Heart left ventricle (tissue), 16 donors: ENCODE measurements at regions of chr3 and their contacts with region 1.

Region 1: DNA sequence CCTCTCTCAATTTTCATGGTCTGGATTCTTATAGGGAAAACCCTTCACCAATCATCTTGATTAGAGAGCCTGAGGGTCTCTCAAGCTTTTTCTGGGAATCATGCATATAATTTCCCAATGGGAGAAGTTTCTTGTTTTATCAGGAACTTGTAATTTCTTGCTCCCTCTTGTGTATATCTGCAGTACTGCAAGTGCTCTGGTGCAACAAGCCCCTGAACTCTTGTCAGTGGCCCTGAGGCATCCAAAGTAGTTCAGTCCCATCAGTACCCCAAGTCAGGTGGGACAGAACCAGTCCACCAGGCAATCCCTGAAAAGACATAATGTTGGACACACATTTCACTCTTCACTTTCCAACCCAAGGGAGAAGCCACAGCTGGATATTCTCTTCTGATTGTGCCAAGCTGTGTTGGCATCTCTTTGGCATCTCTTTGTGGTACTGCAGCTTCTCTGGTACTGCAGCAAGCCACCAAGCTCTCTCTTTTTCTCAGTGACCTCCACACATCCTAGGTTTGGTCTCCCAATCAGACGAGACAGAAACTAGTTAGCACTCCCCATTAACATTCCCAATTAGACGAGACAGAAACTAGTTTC is 214.5 kb downstream of the ZIC4 start:
- DNase-seq: no peak
- ATAC-seq: no peak
- H3K4me3 ChIP-seq: no peak overlapping the region
- H3K27ac ChIP-seq: no peak overlapping the region
- H3K4me1 ChIP-seq: no peaks in the 10 kb centered on the region
- H3K27me3 ChIP-seq: no peaks in the 10 kb centered on the region
- CTCF ChIP-seq: peak; percentile 49 to 72 (median 68)
- POLR2A ChIP-seq: no peak

Region 2: DNA sequence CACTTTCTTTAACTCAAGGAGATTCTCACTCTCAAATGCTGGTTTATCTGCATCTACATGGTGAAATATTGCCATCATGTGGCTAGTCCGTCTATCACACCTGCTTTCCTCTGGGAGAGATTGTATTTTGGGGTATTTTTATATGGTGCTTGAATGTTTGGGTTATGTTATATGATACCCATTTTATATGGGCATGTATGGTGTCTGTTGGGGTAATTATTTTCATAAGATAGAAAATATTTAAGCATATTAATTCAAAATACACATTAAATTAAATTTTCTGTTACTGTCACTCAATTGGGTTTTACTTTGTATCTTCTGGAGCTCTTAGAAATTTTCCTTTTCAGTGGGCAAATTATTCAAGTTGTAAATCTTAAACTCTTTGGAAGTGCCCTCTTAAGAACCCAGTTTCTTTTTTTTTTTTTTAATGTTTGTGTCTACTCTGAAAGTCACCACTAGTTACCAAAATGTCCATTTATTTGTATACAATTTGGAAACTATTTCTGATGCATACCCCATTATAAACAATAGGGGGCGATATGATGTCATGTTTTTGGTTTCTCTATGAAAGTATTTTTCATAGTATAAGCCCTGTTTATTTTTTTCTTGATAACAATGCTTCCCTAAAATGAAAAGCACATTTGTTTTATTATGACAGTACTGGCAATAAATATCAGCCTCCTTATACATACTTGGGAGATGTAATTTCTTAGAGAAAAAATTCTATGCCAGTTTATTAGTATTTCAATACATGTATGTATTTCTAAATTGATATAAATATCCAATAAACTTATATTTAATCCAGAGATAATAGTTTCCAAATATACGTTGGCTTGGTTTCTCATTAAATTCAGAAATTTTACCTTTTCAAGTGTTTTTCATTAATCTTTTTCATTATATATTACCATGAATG is 550.7 kb before region 1 on chr3:
- intact Hi-C with region 1: loop called in 1 of 10 experiments (anchors 10 kb)
- DNase-seq: no peak
- ATAC-seq: no peak
- H3K4me3 ChIP-seq: no peak overlapping the region
- H3K27ac ChIP-seq: no peak overlapping the region
- H3K4me1 ChIP-seq: no peaks in the 10 kb centered on the region
- H3K27me3 ChIP-seq: no peaks in the 10 kb centered on the region
- CTCF ChIP-seq: peak; percentile 25 to 57 (median 42)
- POLR2A ChIP-seq: no peak

Region 3: GRCh38 chr3:146747928-146748327 is 444.0 kb before region 1 on chr3:
- intact Hi-C with region 1: loop called in 2 of 10 experiments (anchors 5 to 10 kb)
- DNase-seq: no peak
- ATAC-seq: no peak
- H3K4me3 ChIP-seq: no peak overlapping the region
- H3K27ac ChIP-seq: no peak overlapping the region
- H3K4me1 ChIP-seq: no peaks in the 10 kb centered on the region
- H3K27me3 ChIP-seq: no peaks in the 10 kb centered on the region
- CTCF ChIP-seq: peak in 6 of 12 donors; percentile 16 to 50 (median 44)
- POLR2A ChIP-seq: no peak

Region 4: GRCh38 chr3:146817704-146818103 is 374.2 kb before region 1 on chr3:
- intact Hi-C with region 1: loop called (anchors 5 to 10 kb)
- DNase-seq: no peak
- ATAC-seq: no peak
- H3K4me3 ChIP-seq: no peak overlapping the region
- H3K27ac ChIP-seq: no peak overlapping the region
- H3K4me1 ChIP-seq: no peaks in the 10 kb centered on the region
- H3K27me3 ChIP-seq: no peaks in the 10 kb centered on the region
- CTCF ChIP-seq: peak in 9 of 12 donors; percentile 21 to 51 (median 48)
- POLR2A ChIP-seq: no peak